ENCODE measurements at regions of chr3 and their contacts with region 1.

Region 1: DNA sequence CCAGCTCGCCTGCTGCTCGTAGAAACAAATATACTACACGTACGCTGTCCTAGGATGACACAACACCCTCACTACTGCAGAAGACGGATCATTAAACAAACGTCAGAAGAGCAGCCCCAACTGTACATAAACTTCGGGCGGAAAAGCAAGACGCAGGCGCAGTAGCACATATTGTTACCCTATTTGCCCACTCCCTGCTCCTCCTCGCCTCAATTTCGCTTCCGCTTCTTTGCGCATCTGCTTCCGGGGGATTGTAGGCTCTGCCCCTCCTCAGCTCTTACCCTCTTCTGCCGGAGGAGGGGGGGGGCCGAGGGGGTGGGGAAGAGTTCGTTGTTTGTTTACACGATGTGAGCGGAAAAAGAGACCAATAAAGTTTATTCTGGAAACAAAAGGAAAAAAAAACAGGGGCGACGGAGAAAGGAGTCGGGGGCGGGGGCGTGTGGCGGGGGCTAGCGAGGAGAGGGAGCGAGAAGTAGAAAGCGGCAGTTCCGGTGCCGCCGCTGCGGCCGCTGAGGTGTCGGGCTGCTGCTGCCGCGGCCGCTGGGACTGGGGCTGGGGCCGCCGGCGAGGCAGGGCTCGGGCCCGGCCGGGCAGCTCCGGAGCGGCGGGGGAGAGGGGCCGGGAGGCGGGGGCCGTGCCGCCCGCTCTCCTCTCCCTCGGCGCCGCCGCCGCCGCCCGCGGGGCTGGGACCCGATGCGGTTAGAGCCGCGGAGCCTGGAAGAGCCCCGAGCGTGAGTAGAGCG is at the start of gene PIK3CA:
- DNase-seq: peak; percentile 98
- H3K4me3 ChIP-seq: peak within 1 kb of the TSS; percentile 89
- H3K27ac ChIP-seq: peak within 1 kb of the TSS; percentile 77
- H3K4me1 ChIP-seq: peaks cover 22% of the 10 kb centered on the region
- CTCF ChIP-seq: 0 out of 2 replicates have a peak, but pooled peaks have one; percentile 7
- total RNA-seq, gene PIK3CA: 6.9 and 9.0 TPM in 2 replicates

Region 2: GRCh38 chr3:179015551-179016020 is 132.5 kb before region 1 on chr3:
- CTCF ChIA-PET with region 1: no interaction called
- POLR2A ChIA-PET with region 1: interaction called, 3 read pairs
- intact Hi-C with region 1: loop called (anchors 1 kb)
- DNase-seq: peak; percentile 86
- H3K4me3 ChIP-seq: no peak overlapping the region
- H3K27ac ChIP-seq: no peak overlapping the region
- H3K4me1 ChIP-seq: peaks cover 41% of the 10 kb centered on the region
- CTCF ChIP-seq: peak; percentile 97

Region 3: DNA sequence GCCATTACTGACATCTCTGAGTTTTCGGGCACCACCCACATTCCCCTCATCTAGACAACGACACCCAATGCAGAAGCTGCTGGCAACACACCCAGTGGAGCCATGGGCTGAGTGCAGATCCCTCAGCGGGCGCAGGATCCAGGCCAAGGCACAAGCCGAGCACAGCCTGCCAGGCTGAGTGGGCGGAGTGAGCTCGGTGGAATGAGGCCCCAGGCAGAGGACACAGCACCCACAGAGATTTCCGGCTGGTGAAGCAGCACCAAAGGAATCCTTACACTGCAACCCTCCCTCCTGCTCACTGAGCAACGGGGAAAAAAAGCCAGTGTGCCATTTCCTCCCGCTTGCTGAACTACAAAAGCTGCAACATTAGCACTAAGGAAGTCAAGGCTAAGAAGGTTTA is 110.7 kb before region 1 on chr3:
- CTCF ChIA-PET with region 1: no interaction called
- POLR2A ChIA-PET with region 1: no interaction called
- intact Hi-C with region 1: no loop called
- DNase-seq: no peak
- H3K4me3 ChIP-seq: no peak overlapping the region
- H3K27ac ChIP-seq: no peak overlapping the region
- H3K4me1 ChIP-seq: no peaks in the 10 kb centered on the region
- CTCF ChIP-seq: no peak

Region 4: DNA sequence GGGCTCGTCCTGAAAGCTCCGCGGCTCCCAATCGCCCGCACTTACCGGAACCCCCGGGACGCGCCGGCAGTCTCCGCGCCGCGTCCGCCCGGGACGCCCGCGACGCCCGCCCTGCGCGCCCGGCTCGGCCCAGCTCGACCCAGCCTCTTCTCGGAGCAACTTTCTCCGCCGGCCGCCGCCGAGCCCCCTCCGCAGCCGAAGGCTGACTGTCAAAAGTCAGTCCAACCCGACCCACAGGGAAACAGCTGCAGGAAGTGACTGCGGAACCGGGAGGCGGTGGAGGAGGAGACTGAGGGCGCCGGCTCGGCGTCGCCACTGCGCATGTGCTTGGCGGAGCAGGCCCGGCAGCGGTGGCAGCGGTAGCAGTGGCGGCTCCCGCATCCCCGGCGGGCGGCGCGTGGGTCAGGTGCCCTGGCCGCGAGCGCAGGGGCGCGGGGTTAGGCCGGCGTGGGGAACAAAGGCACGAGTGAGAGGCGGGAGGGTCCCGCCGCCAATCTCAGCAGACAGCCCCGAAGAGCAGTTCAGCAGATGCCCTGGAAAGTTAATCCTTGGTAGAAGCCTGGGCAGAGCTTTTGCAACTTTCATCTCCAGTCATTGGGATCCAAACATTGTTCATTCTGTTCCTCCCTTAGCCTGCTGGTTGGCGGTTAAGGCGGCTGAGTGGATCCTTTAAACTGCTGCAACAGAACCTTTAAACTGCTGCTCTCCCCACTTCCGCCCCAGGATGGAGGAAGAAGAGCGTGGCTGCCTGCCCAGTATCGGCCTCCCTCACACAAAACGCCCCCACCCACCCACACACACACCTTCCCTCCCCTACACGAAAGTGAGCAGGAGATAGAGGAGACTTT is 76.3 kb before region 1 on chr3 and contains the start of gene ZMAT3:
- CTCF ChIA-PET with region 1: no interaction called
- POLR2A ChIA-PET with region 1: interaction called, 5 read pairs
- intact Hi-C with region 1: loop called (anchors 1 kb)
- DNase-seq: peak; percentile 82
- H3K4me3 ChIP-seq: peak within 1 kb of the TSS; percentile 92
- H3K27ac ChIP-seq: peak within 1 kb of the TSS; percentile 73
- H3K4me1 ChIP-seq: peaks cover 40% of the 10 kb centered on the region
- CTCF ChIP-seq: no peak
- total RNA-seq, gene ZMAT3: 3.7 TPM in 2 replicates

Region 5: DNA sequence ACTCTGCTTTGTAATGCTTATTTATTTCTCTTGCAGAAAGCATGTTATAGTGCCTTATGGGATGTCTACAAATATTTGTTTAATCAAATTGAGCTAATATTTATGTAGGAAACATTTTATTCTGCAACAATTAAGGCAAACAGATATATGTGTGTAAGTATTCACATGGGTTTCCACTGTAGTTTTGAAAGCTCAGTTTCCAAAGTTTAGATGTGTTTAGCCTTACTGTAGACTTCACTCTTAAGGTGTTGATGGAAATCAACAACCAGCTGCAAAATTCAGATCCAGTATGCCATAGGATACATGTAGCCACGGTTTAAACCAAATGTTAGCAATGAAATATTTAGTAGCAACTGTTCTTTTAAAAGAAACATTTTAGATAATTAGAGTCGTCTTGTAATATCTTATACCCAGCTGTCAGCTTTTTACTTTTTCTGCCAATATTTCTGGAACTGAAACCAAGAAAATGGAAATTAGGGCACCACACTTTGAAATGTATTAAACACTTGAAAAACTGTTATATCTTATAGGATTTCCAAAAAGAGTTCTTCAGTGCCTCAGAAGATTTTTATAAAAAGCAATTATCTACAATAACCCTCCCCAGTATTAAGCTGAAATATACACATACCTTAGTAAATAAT is 18.6 kb after region 1 on chr3:
- CTCF ChIA-PET with region 1: no interaction called
- POLR2A ChIA-PET with region 1: interaction called, 10 read pairs
- intact Hi-C with region 1: loop called (anchors 1 kb)
- DNase-seq: peak; percentile 41
- H3K4me3 ChIP-seq: peak overlapping the region; percentile 56
- H3K27ac ChIP-seq: peak overlapping the region; percentile 71
- H3K4me1 ChIP-seq: peaks cover 54% of the 10 kb centered on the region
- CTCF ChIP-seq: no peak

Region 6: DNA sequence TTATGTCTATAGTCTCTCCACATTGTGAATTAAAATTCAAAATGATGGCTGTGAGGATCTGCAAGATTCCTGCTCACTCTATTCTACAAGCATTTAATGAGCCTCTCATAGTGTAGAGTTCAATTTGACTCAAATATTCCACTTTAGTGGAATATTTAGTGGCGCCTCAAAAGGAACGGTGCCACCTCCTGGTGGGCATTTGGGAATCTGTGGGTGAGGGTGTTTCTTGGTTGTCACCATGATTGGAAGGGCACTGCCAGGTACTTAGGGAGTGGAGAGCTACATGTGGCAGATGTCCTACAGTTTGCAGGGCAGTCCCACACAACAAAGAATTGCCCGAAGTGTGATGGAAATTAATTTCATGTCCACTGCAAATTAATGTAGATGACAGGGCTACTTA is 124.3 kb after region 1 on chr3:
- CTCF ChIA-PET with region 1: no interaction called
- POLR2A ChIA-PET with region 1: no interaction called
- intact Hi-C with region 1: loop called (anchors 5 kb)
- DNase-seq: no peak
- H3K4me3 ChIP-seq: no peak overlapping the region
- H3K27ac ChIP-seq: no peak overlapping the region
- H3K4me1 ChIP-seq: peaks cover 9% of the 10 kb centered on the region
- CTCF ChIP-seq: peak; percentile 39; the same call in 1 of the 2 replicates

Region 7: DNA sequence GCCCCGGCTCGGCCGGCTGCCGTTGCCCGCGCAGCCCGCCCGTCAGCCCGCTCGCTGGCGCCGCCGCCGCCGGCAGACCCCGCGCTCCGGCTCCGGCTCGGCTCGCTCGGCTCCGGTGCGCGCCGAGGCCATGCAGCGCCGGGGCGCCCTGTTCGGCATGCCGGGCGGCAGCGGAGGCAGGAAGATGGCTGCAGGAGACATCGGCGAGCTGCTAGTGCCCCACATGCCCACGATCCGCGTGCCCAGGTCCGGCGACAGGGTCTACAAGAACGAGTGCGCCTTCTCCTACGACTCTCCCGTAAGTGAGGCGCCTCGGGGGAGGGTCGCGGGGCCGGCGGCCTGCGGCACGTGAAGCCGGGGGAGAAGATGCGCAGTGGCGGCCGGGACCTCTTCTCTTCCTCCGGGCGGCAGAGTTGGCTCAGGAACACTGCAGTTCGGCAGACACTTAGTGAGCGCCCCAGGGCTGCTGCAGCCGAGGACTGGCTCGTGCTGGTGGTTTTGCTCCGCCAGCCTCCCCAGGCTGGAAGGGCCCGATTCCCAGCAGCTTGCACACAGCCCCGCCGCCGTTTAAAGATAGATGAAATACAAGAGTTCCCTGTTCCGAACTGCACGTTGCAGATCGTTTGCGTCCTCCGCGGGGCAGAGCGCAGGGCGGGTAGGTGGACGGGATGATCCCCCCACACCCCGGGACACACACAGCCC is 505.2 kb after region 1 on chr3:
- CTCF ChIA-PET with region 1: no interaction called
- POLR2A ChIA-PET with region 1: no interaction called
- intact Hi-C with region 1: loop called (anchors 2 kb)
- DNase-seq: peak; percentile 84
- H3K4me3 ChIP-seq: peak overlapping the region; percentile 96
- H3K27ac ChIP-seq: peak overlapping the region; percentile 81
- H3K4me1 ChIP-seq: peaks cover 32% of the 10 kb centered on the region
- CTCF ChIP-seq: peak; percentile 25; the same call in 1 of the 2 replicates